Caco-2 (cell line): ENCODE measurements at regions of chr19 and their contacts with region 1.

Region 1: GRCh38 chr19:33778089-33778791 is 18.4 kb upstream of the KCTD15 start:
- DNase-seq: peak; percentile 70 to 92
- H3K4me3 ChIP-seq: peak overlapping the region; percentile 32
- H3K4me3 Mint-ChIP-seq: peak overlapping the region; percentile 85
- H3K27ac Mint-ChIP-seq: peak overlapping the region; percentile 1
- H3K4me1 ChIP-seq: no peaks in the 10 kb centered on the region
- H3K4me1 Mint-ChIP-seq: peaks cover 14% of the 10 kb centered on the region
- H3K27me3 ChIP-seq: no peaks in the 10 kb centered on the region; the same call in 1 of the 2 replicates
- H3K27me3 Mint-ChIP-seq: peaks cover 31% of the 10 kb centered on the region
- CTCF ChIP-seq: peak; percentile 100

Region 2: GRCh38 chr19:33430674-33431277 is 347.5 kb before region 1 on chr19:
- CTCF ChIA-PET with region 1: interaction called, 15 read pairs
- POLR2A ChIA-PET with region 1: no interaction called
- intact Hi-C with region 1: no loop called
- DNase-seq: peak; percentile 72 to 82
- H3K4me3 ChIP-seq: no peak overlapping the region
- H3K4me3 Mint-ChIP-seq: no peak overlapping the region
- H3K27ac Mint-ChIP-seq: no peak overlapping the region
- H3K4me1 ChIP-seq: no peaks in the 10 kb centered on the region
- H3K4me1 Mint-ChIP-seq: no peaks in the 10 kb centered on the region
- H3K27me3 ChIP-seq: no peaks in the 10 kb centered on the region
- H3K27me3 Mint-ChIP-seq: no peaks in the 10 kb centered on the region
- CTCF ChIP-seq: peak; percentile 80 to 96

Region 3: DNA sequence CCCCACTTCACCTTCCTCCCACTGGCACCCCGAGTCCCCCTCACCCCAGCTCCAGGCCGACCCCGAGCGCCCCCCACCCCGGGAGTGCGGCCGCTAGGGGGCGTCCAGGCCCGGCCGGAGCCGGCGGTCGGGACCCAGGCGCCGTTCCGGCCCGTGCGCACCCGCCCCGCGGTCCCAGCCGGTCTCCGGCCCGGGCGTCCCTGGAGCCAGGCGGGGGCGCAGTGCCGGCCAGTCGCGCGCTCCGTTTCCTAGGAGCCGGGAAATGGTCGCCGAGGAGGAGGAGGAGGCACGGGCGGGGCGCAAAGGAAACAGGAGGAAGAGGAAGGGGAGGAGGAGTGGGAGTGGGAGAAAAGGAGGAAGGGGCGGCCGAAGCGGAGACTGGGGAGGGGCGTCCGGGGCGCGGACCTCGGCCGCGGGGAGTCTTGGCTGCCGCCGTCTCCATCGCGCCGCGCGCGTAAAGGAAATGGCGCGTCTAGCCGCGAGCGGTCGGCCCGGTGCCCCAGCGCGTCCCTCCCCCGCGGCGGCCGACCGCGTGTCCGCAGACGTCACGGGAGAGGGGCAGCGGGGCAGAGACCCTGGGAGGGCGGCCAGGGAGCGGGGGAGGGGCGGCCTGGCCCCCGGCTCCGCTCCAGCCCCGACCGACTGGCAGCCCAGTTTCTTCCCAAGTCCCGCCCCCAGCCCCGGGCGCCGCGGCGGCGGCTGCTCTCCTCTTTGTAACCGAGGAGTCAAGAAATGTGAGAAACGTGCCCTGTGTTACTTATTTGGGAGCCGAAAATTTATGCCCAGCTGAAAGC is 17.3 kb after region 1 on chr19:
- CTCF ChIA-PET with region 1: interaction called, 9 read pairs
- POLR2A ChIA-PET with region 1: no interaction called
- intact Hi-C with region 1: loop called (anchors 2 kb)
- DNase-seq: peak; percentile 83 to 95
- H3K4me3 ChIP-seq: peak overlapping the region; percentile 69
- H3K4me3 Mint-ChIP-seq: peak overlapping the region; percentile 80
- H3K27ac Mint-ChIP-seq: peak overlapping the region; percentile 82
- H3K4me1 ChIP-seq: peaks cover 7% of the 10 kb centered on the region
- H3K4me1 Mint-ChIP-seq: no peaks in the 10 kb centered on the region
- H3K27me3 ChIP-seq: no peaks in the 10 kb centered on the region
- H3K27me3 Mint-ChIP-seq: peaks cover 7% of the 10 kb centered on the region
- CTCF ChIP-seq: peak; percentile 78 to 98

Region 4: GRCh38 chr19:33812388-33813330 is 34.4 kb after region 1 on chr19:
- CTCF ChIA-PET with region 1: no interaction called
- POLR2A ChIA-PET with region 1: no interaction called
- intact Hi-C with region 1: no loop called
- DNase-seq: no peak
- H3K4me3 ChIP-seq: no peak overlapping the region
- H3K4me3 Mint-ChIP-seq: no peak overlapping the region
- H3K27ac Mint-ChIP-seq: no peak overlapping the region
- H3K4me1 ChIP-seq: no peaks in the 10 kb centered on the region
- H3K4me1 Mint-ChIP-seq: no peaks in the 10 kb centered on the region
- H3K27me3 ChIP-seq: no peaks in the 10 kb centered on the region
- H3K27me3 Mint-ChIP-seq: no peaks in the 10 kb centered on the region
- CTCF ChIP-seq: peak in 1 of 2 experiments; percentile 5

Region 5: DNA sequence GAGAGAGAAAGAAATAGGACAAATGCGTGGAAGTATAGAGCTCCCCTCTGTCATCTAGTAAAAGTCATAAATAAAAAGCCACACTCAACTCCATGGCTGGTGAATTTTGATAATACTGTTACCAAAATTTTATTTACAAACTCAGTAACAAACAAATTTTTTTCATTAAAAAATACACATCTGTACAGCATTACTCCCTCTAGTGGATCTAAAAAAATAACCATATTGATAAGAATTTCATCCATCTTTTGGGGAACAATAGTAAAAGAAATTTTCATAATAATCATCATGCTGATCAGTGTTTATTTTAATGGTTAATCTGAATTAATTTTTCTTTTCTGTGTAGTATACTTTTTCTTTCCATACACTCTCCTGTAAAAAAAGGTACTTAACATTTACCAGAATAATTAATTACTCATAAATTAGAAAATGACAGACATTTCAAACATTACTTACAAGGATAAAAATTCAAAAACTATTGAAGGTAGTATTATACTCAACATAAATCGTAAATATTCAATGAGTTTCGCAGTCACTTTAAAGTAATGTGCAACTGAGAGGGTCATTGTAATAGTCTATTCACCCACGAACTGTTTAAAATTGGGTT is 220.6 kb after region 1 on chr19:
- CTCF ChIA-PET with region 1: no interaction called
- POLR2A ChIA-PET with region 1: interaction called, 3 read pairs
- intact Hi-C with region 1: loop called (anchors 5 kb)
- DNase-seq: no peak
- H3K4me3 ChIP-seq: no peak overlapping the region
- H3K4me3 Mint-ChIP-seq: no peak overlapping the region
- H3K27ac Mint-ChIP-seq: no peak overlapping the region
- H3K4me1 ChIP-seq: no peaks in the 10 kb centered on the region
- H3K4me1 Mint-ChIP-seq: no peaks in the 10 kb centered on the region
- H3K27me3 ChIP-seq: no peaks in the 10 kb centered on the region
- H3K27me3 Mint-ChIP-seq: peaks cover 12% of the 10 kb centered on the region
- CTCF ChIP-seq: peak; percentile 32 to 58

Region 6: DNA sequence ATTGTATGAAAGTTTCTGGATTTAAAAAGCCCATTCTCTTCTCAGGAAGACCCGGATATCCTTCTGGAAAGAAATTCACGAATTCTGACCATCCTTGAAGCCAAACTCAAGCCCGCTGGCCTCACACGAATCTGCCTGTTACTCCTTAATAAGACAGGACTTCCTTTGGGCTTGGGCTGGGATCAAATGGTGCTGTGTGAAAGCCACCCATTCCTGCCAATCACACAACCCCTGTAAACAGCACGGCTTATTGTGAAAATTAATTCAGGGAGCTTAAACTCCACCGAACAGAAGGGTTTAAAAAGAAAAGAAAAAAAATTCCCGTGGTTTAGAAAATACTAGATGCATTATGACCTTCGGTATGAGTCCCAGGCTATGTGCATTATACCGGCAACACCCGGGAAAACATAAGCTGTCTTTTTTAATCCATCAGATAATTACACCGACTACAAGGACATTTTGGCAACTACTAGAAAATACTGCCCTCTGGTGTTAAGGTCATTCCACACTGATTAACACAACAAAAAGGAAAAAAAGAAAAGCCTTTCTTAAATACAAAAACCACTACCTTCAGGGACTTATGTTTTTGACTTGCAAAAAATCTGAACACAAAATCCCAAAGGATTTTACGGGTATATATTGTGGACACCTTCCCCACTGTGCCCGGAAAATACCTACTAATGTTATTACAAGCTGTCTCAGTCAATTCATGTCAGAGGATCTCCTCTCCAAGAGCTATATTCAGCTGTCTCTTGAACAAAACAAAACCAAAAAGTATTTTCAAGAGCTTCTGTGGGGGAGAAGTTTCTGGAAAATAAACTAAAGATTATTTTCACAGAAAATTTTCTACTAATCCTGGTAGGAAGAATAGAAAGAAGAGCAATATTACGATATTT is 318.0 kb after region 1 on chr19:
- CTCF ChIA-PET with region 1: interaction called, 89 read pairs
- POLR2A ChIA-PET with region 1: no interaction called
- intact Hi-C with region 1: loop called (anchors 1 kb)
- DNase-seq: peak in 1 of 2 experiments; percentile 51
- H3K4me3 ChIP-seq: no peak overlapping the region
- H3K4me3 Mint-ChIP-seq: no peak overlapping the region
- H3K27ac Mint-ChIP-seq: no peak overlapping the region
- H3K4me1 ChIP-seq: no peaks in the 10 kb centered on the region
- H3K4me1 Mint-ChIP-seq: no peaks in the 10 kb centered on the region
- H3K27me3 ChIP-seq: no peaks in the 10 kb centered on the region
- H3K27me3 Mint-ChIP-seq: peaks cover 15% of the 10 kb centered on the region
- CTCF ChIP-seq: peak; percentile 66 to 75

Region 7: DNA sequence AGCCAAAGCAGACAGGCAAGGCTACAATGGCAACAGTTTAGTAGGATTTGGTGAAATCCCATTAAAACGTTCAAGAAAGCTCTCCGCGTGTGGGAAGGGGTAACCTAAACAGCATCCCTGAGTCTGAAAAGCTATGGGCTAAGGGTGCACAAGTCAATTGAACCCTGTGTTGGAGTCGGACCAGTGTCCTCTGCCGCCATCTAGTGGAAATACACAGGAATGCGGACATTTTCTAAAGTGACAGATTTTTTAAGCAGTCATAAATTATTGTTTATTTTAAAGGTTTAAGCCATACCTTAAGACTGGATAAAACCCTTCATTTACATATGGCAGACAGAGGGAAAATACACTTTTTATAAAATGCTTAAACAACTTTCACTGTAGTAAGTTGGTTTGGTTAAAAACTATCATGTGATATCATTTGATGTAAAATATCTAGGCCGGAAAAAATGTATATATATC is 367.5 kb after region 1 on chr19:
- CTCF ChIA-PET with region 1: interaction called, 17 read pairs
- POLR2A ChIA-PET with region 1: no interaction called
- intact Hi-C with region 1: loop called (anchors 1 kb)
- DNase-seq: peak; percentile 58 to 70
- H3K4me3 ChIP-seq: no peak overlapping the region
- H3K4me3 Mint-ChIP-seq: no peak overlapping the region
- H3K27ac Mint-ChIP-seq: no peak overlapping the region
- H3K4me1 ChIP-seq: no peaks in the 10 kb centered on the region; the same call in 1 of the 2 replicates
- H3K4me1 Mint-ChIP-seq: peaks cover 5% of the 10 kb centered on the region
- H3K27me3 ChIP-seq: no peaks in the 10 kb centered on the region
- H3K27me3 Mint-ChIP-seq: no peaks in the 10 kb centered on the region
- CTCF ChIP-seq: peak; percentile 73 to 76

Region 8: GRCh38 chr19:34712395-34713261 is 934.4 kb after region 1 on chr19:
- CTCF ChIA-PET with region 1: no interaction called
- POLR2A ChIA-PET with region 1: no interaction called
- intact Hi-C with region 1: loop called (anchors 5 kb)
- DNase-seq: peak; percentile 59 to 77
- H3K4me3 ChIP-seq: no peak overlapping the region
- H3K4me3 Mint-ChIP-seq: no peak overlapping the region
- H3K27ac Mint-ChIP-seq: no peak overlapping the region
- H3K4me1 ChIP-seq: no peaks in the 10 kb centered on the region
- H3K4me1 Mint-ChIP-seq: no peaks in the 10 kb centered on the region
- H3K27me3 ChIP-seq: no peaks in the 10 kb centered on the region
- H3K27me3 Mint-ChIP-seq: peaks cover 2% of the 10 kb centered on the region
- CTCF ChIP-seq: peak; percentile 47 to 72